ENCODE measurements at regions of chr7 and their contacts with region 1.

Region 1: DNA sequence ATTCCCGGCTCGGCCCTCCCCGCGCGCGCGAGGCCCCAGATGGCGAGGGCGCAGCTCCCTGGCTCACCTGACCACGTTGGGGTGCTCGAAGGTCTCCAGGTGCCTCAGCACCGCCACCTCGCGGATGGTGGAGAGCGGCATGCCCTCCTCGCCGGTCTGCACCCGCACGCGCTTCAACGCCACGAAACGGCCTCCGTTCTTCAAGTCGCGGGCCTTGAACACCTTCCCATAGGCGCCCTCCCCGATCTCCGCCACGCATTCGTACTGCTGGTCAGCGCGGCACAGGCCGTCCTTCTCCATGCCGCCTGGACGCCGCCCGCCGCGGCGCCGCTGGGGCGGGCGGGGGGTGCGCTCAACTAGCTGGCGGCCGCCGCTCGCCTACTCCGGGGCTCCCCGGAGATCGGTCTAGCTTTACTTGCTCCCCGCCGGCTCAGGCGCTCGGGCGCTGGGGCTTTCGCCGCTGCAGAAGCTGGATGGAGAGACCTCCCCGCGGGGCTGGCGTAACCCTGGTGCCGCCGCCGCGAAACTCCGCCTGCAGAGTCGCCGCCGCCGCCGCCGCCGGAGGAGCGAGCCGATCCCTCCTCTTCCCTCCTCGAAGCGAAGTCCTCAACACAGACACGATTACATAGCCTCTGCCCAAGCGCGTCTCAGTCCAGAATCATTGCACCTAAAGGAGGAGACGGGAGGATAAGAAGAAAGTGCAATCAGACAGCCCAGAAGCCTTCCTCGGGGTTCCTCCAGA is 3.2 kb downstream of the CDK6 start:
- DNase-seq: peak; percentile 74 to 93 (median 84)
- ATAC-seq: peak; percentile 77 to 79 (median 78)
- H3K4me3 ChIP-seq: peak overlapping the region; percentile 92 to 98
- H3K4me3 Mint-ChIP-seq: peak overlapping the region; percentile 93 to 98 (median 97)
- H3K27ac ChIP-seq: peak overlapping the region; percentile 83
- H3K27ac Mint-ChIP-seq: peak overlapping the region; percentile 87 to 95
- H3K4me1 ChIP-seq: peaks cover 31 to 34% of the 10 kb centered on the region in 2 experiments
- H3K4me1 Mint-ChIP-seq: peaks cover 45 to 66% (median 50%) of the 10 kb centered on the region in 3 donors
- H3K27me3 ChIP-seq: peaks cover 0 to 8% of the 10 kb centered on the region in 2 experiments
- H3K27me3 Mint-ChIP-seq: peaks cover 0 to 3% of the 10 kb centered on the region in 2 donors

Region 2: DNA sequence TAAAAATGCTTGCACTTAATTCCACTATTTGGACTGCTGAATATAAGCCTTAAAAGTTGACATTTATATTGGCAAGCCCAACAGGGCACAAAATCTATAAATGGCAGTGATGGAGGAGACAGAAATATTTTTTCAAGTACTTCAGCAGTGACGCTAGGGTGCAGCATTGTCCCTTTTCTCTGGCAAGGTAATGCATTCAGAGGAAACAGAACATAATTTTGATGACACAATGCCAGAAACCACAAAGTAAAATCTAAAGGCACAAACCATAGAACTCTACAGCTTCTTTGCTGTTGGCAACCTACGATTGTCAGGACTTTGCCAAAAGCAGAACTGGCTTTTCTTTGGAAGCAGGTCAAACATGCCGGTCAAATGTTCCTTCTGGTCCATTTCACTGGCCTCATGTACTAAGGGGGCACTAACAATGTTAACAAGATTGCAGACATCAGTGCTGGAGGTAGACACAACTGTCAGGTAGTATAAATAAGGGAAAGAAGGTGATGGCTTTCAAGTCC is 212.1 kb before region 1 on chr7:
- CTCF ChIA-PET with region 1: interaction called, 3 to 22 read pairs
- POLR2A ChIA-PET with region 1: no interaction called
- DNase-seq: peak; percentile 23 to 91 (median 74)
- ATAC-seq: peak; percentile 86 to 90 (median 88)
- H3K4me3 ChIP-seq: no peak overlapping the region
- H3K4me3 Mint-ChIP-seq: peak overlapping the region in 1 of 3 donors; percentile 15
- H3K27ac ChIP-seq: peak overlapping the region; percentile 5
- H3K27ac Mint-ChIP-seq: peak overlapping the region; percentile 82 to 85
- H3K4me1 ChIP-seq: peaks cover 4 to 21% of the 10 kb centered on the region in 2 experiments
- H3K4me1 Mint-ChIP-seq: peaks cover 29 to 38% (median 32%) of the 10 kb centered on the region in 3 donors
- H3K27me3 ChIP-seq: no peaks in the 10 kb centered on the region
- H3K27me3 Mint-ChIP-seq: no peaks in the 10 kb centered on the region

Region 3: DNA sequence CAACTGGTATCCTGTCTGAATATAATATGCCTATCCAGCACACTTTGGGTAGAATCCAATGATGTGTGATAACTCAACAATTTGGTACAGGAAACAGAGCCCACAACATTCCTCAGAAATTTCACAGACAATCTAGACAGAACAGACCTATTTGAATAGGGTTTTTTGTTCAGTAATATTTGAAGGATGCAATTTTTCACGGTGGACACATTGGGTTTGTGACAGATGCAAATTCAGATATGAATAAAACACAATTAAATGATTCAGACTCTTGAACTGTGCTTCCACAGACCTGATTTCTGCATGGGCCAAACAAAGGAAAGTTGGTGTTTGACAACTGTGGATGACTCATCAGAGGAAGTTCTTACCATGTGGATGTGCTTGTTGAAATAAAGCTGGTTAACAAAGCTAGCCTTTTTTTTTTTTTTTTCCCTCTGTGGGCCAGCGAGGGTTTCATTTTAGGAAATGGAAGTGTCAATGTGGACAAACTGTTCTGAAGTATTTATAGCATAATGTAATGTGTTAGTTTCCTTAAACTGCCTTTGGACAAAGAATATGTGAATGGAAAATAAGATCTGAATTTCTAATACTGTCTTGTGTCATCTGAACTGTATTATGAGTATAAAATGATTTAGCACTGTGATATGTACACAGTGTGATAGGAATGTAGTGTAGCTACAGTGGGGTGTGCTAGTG is 199.8 kb before region 1 on chr7:
- CTCF ChIA-PET with region 1: interaction called, 3 to 12 read pairs
- POLR2A ChIA-PET with region 1: interaction called, 3 read pairs
- DNase-seq: peak in 1 of 35 experiments; percentile 47
- ATAC-seq: peak; percentile 57 to 91 (median 81)
- H3K4me3 ChIP-seq: no peak overlapping the region
- H3K4me3 Mint-ChIP-seq: no peak overlapping the region
- H3K27ac ChIP-seq: no peak overlapping the region
- H3K27ac Mint-ChIP-seq: peak overlapping the region; percentile 55 to 58
- H3K4me1 ChIP-seq: peaks cover 3 to 4% of the 10 kb centered on the region in 2 experiments
- H3K4me1 Mint-ChIP-seq: peaks cover 37 to 52% (median 47%) of the 10 kb centered on the region in 3 donors
- H3K27me3 ChIP-seq: no peaks in the 10 kb centered on the region
- H3K27me3 Mint-ChIP-seq: no peaks in the 10 kb centered on the region

Region 4: DNA sequence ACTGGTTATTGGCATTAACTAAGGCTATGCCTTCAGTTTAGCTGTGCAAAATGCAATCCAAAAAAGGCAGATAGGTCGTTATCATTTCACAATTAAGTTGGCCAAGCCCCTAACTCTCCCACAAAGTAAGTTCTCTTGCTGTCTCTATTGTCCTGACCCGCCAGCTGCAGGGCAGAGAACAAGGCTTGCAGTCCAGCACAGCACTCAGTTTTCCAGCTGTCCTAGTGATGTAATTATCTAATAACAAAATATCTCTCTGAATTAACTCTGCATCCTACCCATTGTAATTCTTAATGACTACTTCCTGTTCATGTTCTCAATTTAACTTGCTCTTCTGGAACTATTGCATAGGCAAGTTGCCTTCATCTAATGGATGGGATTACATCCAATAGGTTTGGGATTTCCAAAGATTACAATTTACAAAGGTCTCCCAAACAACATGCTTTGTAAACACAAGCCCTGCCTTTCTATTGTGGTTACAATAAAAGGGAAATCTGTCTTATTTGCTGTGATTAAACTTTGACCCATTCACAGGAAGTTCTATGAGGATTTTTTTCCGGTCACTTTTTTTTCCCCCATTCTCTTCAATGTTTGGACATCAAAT is 52.0 kb before region 1 on chr7:
- CTCF ChIA-PET with region 1: interaction called, 3 to 7 read pairs
- POLR2A ChIA-PET with region 1: interaction called in 1 of 2 experiments, 11 read pairs
- DNase-seq: no peak
- ATAC-seq: no peak
- H3K4me3 ChIP-seq: no peak overlapping the region
- H3K4me3 Mint-ChIP-seq: no peak overlapping the region
- H3K27ac ChIP-seq: no peak overlapping the region
- H3K27ac Mint-ChIP-seq: no peak overlapping the region
- H3K4me1 ChIP-seq: peaks cover 0 to 3% of the 10 kb centered on the region in 2 experiments
- H3K4me1 Mint-ChIP-seq: peaks cover 35 to 57% (median 45%) of the 10 kb centered on the region in 3 donors
- H3K27me3 ChIP-seq: no peaks in the 10 kb centered on the region
- H3K27me3 Mint-ChIP-seq: no peaks in the 10 kb centered on the region

Region 5: GRCh38 chr7:92813390-92814024 is 19.7 kb before region 1 on chr7:
- CTCF ChIA-PET with region 1: interaction called, 5 to 14 read pairs
- POLR2A ChIA-PET with region 1: interaction called, 3 read pairs
- DNase-seq: peak in 1 of 35 experiments; percentile 47
- ATAC-seq: peak; percentile 69 to 87 (median 74)
- H3K4me3 ChIP-seq: no peak overlapping the region
- H3K4me3 Mint-ChIP-seq: peak overlapping the region; percentile 43 to 70 (median 49)
- H3K27ac ChIP-seq: peak overlapping the region; percentile 20
- H3K27ac Mint-ChIP-seq: peak overlapping the region; percentile 68 to 79
- H3K4me1 ChIP-seq: peaks cover 13 to 23% of the 10 kb centered on the region in 2 experiments
- H3K4me1 Mint-ChIP-seq: peaks cover 50 to 71% (median 66%) of the 10 kb centered on the region in 3 donors
- H3K27me3 ChIP-seq: no peaks in the 10 kb centered on the region
- H3K27me3 Mint-ChIP-seq: no peaks in the 10 kb centered on the region

Region 6: GRCh38 chr7:92854501-92855238 is 21.5 kb after region 1 on chr7:
- CTCF ChIA-PET with region 1: no interaction called
- POLR2A ChIA-PET with region 1: no interaction called
- DNase-seq: no peak
- ATAC-seq: no peak
- H3K4me3 ChIP-seq: no peak overlapping the region
- H3K4me3 Mint-ChIP-seq: no peak overlapping the region
- H3K27ac ChIP-seq: no peak overlapping the region
- H3K27ac Mint-ChIP-seq: no peak overlapping the region
- H3K4me1 ChIP-seq: peaks cover 0 to 5% of the 10 kb centered on the region in 2 experiments
- H3K4me1 Mint-ChIP-seq: peaks cover 0 to 10% (median 4%) of the 10 kb centered on the region in 3 donors
- H3K27me3 ChIP-seq: no peaks in the 10 kb centered on the region
- H3K27me3 Mint-ChIP-seq: peaks cover 0 to 10% of the 10 kb centered on the region in 2 donors

Measured in T-cell (primary cell).